Esophagus muscularis mucosa (tissue), 4 donors: ENCODE measurements at regions of chrX and their contacts with region 1.

Region 1: DNA sequence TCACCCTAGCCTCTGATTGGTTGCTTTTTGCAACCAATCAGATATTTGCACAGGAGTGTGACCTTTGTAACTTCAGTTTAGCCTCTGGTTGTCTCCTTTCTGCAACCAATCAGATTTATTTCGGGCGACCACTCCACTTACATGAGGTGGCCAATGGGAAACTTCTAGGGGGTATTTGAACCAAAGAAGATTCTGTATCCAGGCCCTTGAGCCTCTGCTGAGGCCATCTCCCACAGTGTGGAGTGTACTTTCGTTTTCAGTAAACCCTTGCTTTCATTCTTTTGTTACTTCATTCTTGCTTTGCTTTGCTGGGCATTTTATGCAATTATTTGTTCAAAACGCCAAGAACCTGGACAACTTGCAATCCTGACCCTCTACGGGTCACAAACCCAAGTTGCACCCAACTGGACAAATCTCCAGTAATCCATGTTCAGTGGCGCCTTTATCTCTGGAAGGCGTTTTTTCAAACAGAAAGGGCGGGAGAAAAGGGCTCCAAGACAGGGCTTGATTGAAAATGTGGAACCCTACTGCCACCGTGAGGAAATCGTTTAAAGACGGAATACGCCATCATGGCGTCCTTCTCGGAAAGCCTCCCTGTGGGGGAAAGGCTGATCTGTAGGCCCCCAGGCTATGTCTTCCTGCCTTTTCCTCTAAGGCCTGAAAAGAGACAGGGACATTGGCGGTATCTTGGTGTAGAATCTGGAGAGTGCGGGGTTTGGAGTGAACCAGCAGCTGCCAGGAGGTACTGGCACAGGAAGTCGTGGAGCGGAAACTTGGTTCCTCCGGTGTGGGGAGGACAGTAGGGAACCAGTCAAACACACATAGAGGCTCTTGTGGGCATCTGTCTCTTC is 184.6 kb downstream of the OR13H1 start:
- DNase-seq: no peak
- H3K4me3 ChIP-seq: peak overlapping the region in 2 of 4 donors; percentile 54 to 64
- H3K27ac ChIP-seq: peak overlapping the region in 2 of 4 donors; percentile 82 to 85
- H3K4me1 ChIP-seq: peaks cover 0 to 8% (median 0%) of the 10 kb centered on the region in 4 donors
- H3K27me3 ChIP-seq: no peaks in the 10 kb centered on the region
- CTCF ChIP-seq: peak in 2 of 3 experiments; percentile 43 to 46
- EP300 ChIP-seq: no peak
- POLR2A ChIP-seq: no peak

Region 2: DNA sequence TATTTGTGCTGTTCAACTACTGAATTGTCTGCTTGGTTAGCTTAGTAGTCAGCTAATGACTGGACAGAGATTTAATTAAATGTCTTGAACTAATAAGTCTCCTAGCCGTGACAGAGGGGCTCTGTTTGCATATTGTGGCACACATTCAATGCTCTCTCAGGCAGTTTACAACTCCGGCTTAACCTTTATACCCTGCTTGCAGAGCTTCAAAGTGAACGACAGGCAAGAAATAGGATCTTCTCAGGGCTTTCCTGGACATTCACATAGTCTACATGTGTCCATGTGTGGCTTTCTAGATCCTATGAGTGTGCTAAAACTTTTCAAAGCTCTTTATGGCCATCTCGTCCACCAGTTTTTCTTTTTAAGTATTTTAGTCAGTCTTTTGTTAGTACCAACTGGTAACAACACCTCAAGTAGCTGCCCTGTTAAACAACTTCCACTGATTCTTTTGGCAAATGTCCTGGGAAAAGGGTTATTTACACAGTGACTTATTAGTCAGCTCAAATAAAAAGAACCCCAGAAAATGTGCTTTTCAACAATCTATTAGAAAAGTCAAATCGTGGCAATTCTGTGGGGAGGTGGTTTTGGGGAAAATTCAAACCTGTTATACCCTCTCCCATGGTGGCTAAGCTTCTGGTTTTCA is 156.0 kb before region 1 on chrX:
- intact Hi-C with region 1: no loop called
- DNase-seq: no peak
- H3K4me3 ChIP-seq: no peak overlapping the region
- H3K27ac ChIP-seq: no peak overlapping the region
- H3K4me1 ChIP-seq: no peaks in the 10 kb centered on the region
- H3K27me3 ChIP-seq: no peaks in the 10 kb centered on the region
- CTCF ChIP-seq: no peak
- EP300 ChIP-seq: no peak
- POLR2A ChIP-seq: no peak

Region 3: GRCh38 chrX:131812836-131813825 is 84.6 kb after region 1 on chrX:
- intact Hi-C with region 1: loop called (anchors 10 kb)
- DNase-seq: no peak
- H3K4me3 ChIP-seq: peak overlapping the region; percentile 27 to 60 (median 42)
- H3K27ac ChIP-seq: peak overlapping the region in 3 of 4 donors; percentile 54 to 75 (median 58)
- H3K4me1 ChIP-seq: peaks cover 0 to 8% (median 2%) of the 10 kb centered on the region in 4 donors
- H3K27me3 ChIP-seq: no peaks in the 10 kb centered on the region
- CTCF ChIP-seq: peak in 2 of 3 experiments; percentile 47 to 49
- EP300 ChIP-seq: no peak
- POLR2A ChIP-seq: no peak